GM10248 (cell line): ENCODE measurements at regions of chr12 and their contacts with region 1.

Region 1: GRCh38 chr12:6825398-6826124 is 2.6 kb upstream of the P3H3 start:
- DNase-seq: peak; percentile 92
- CTCF ChIP-seq: peak; percentile 93

Region 2: GRCh38 chr12:6764011-6764828 is 61.3 kb before region 1 on chr12:
- CTCF ChIA-PET with region 1: interaction called, 12 read pairs
- POLR2A ChIA-PET with region 1: no interaction called
- DNase-seq: peak; percentile 96
- CTCF ChIP-seq: no peak

Region 3: DNA sequence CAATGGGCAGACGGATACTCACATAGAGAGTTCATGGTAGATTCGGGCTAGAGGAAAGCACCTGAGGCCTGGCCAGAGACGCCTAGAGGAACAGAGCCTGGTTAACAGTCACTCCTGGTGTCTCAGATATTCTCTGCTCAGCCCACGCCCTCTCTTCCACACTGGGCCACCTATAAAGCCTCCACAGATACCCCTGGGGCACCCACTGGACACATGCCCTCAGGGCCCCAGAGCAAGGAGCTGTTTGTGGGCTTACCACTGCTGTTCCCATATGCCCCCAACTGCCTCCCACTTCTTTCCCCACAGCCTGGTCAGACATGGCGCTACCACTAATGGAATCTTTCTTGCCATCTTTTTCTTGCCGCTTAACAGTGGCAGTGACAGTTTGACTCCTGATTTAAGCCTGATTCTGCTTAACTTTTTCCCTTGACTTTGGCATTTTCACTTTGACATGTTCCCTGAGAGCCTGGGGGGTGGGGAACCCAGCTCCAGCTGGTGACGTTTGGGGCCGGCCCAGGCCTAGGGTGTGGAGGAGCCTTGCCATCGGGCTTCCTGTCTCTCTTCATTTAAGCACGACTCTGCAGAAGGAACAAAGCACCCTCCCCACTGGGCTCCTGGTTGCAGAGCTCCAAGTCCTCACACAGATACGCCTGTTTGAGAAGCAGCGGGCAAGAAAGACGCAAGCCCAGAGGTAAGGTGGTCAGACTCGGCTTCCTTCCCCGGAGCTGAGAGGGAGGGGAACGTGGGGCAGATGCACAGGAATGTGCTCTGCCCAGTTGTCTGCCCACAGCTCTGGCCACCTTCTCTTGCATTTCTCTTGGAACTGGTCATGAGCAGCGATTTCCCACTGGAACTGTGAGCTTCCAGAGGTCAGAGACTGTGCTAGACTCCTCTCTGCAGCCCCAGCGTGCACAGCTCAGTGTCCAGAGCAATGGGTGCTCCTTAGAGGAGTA is 36.3 kb before region 1 on chr12 and contains the start of gene CD4:
- CTCF ChIA-PET with region 1: interaction called, 16 read pairs
- POLR2A ChIA-PET with region 1: no interaction called
- DNase-seq: no peak
- CTCF ChIP-seq: no peak

Region 4: DNA sequence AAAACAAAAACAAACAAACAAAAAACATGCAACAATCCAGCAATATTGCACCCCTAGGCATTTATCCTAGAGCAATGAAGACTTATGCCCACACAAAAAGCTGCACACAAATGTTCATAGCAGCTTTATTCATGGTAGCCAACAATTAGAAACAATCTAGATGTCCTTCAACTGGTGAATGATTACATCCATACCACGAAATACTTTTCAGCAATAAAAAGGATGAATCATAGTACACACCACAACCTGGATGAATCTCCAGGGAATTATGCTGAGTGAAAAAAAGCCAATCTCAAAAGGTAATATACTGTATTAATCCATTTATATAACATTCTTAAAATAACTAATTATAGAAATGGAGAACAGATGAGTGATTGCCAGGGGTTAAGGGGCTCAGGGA is 18.4 kb before region 1 on chr12:
- CTCF ChIA-PET with region 1: interaction called, 30 read pairs
- POLR2A ChIA-PET with region 1: no interaction called
- DNase-seq: no peak
- CTCF ChIP-seq: no peak

Region 5: GRCh38 chr12:6839482-6840201 is 14.1 kb after region 1 on chr12:
- CTCF ChIA-PET with region 1: interaction called, 42 read pairs
- POLR2A ChIA-PET with region 1: no interaction called
- DNase-seq: peak; percentile 78
- CTCF ChIP-seq: no peak

Region 6: DNA sequence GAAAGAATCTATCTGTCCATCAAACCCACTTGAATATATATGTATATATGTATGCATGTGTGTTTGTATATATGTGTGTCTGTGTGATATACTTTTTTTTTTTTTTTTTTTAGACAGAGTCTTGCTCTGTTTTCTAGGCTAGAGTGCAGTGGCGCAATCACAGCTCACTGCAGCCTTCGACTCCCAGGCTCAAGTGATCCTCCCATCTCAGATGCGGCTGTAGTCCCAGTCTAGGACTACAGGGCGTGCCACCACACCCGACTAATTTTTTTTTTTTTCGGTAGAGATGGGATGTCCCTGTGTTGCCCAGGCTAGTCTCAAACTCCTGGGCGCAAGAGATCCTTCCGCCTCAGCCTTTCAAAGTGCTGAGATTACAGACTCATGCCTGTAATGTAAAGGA is 853.2 kb after region 1 on chr12:
- CTCF ChIA-PET with region 1: no interaction called
- POLR2A ChIA-PET with region 1: no interaction called
- DNase-seq: no peak
- CTCF ChIP-seq: no peak